ENCODE measurements at regions of chr7 and their contacts with region 1.

Region 1: GRCh38 chr7:116258734-116259133 is 48.4 kb downstream of the TES start:
- DNase-seq: no peak
- H3K4me3 ChIP-seq: no peak overlapping the region
- H3K27ac ChIP-seq: peak overlapping the region in 1 of 2 donors; percentile 4
- H3K4me1 ChIP-seq: peaks cover 0 to 9% (median 2%) of the 10 kb centered on the region in 4 donors
- H3K27me3 ChIP-seq: no peaks in the 10 kb centered on the region
- CTCF ChIP-seq: peak; percentile 71 to 91

Region 2: GRCh38 chr7:116403265-116403664 is 144.5 kb after region 1 on chr7:
- intact Hi-C with region 1: no loop called
- DNase-seq: no peak
- H3K4me3 ChIP-seq: no peak overlapping the region
- H3K27ac ChIP-seq: peak overlapping the region in 1 of 2 donors; percentile 10
- H3K4me1 ChIP-seq: peaks cover 0 to 30% (median 7%) of the 10 kb centered on the region in 4 donors
- H3K27me3 ChIP-seq: no peaks in the 10 kb centered on the region
- CTCF ChIP-seq: no peak

Region 3: GRCh38 chr7:116438267-116438666 is 179.5 kb after region 1 on chr7:
- intact Hi-C with region 1: loop called (anchors 10 kb)
- DNase-seq: no peak
- H3K4me3 ChIP-seq: no peak overlapping the region
- H3K27ac ChIP-seq: peak overlapping the region; percentile 35 to 64
- H3K4me1 ChIP-seq: peaks cover 0 to 64% (median 24%) of the 10 kb centered on the region in 4 donors
- H3K27me3 ChIP-seq: no peaks in the 10 kb centered on the region
- CTCF ChIP-seq: peak; percentile 14 to 16

Region 4: GRCh38 chr7:116525913-116526861 is 267.5 kb after region 1 on chr7:
- intact Hi-C with region 1: loop called (anchors 5 kb)
- DNase-seq: peak; percentile 78 to 92
- H3K4me3 ChIP-seq: peak overlapping the region; percentile 76 to 90
- H3K27ac ChIP-seq: peak overlapping the region; percentile 93 to 99
- H3K4me1 ChIP-seq: peaks cover 0 to 52% (median 11%) of the 10 kb centered on the region in 4 donors
- H3K27me3 ChIP-seq: no peaks in the 10 kb centered on the region
- CTCF ChIP-seq: peak; percentile 83 to 90

Region 5: DNA sequence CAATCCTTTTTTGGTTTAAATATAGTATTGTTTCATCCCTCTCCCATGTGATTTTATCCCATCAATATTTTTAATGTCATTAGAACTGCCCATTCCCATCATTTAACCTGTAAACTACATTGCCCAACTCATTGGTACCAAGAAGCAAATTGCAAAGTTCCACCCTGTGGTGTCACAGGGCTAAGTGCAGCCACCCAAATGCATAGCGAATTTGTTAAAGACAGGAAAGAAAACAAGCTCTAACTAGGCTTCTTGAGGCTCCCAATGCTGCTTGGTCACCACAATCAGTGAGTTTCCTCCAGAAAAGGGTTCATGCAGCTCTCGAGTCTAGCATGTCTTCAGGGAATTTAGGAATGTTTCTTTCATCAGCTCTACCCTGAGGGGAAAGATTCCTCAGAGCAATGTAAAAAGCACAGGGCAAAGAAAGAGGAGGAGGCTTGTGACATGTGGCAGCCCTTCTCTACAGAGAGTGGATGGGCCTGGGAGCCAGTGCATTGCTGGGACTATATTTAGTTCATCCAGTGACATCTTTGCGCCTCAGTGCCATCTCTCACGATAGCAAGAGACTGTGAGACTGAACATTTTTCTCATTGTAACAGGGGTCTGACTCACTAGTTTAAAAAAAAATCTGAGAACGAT is 324.2 kb after region 1 on chr7:
- intact Hi-C with region 1: loop called (anchors 2 kb)
- DNase-seq: peak; percentile 42 to 73
- H3K4me3 ChIP-seq: peak overlapping the region; percentile 0 to 20
- H3K27ac ChIP-seq: peak overlapping the region; percentile 69 to 73
- H3K4me1 ChIP-seq: peaks cover 0 to 43% (median 20%) of the 10 kb centered on the region in 4 donors
- H3K27me3 ChIP-seq: no peaks in the 10 kb centered on the region
- CTCF ChIP-seq: no peak